GM10248 (cell line): ENCODE measurements at regions of chr3 and their contacts with region 1.

Region 1: GRCh38 chr3:65979162-65979561 is 59.6 kb downstream of the MAGI1 start:
- DNase-seq: no peak
- CTCF ChIP-seq: no peak

Region 2: DNA sequence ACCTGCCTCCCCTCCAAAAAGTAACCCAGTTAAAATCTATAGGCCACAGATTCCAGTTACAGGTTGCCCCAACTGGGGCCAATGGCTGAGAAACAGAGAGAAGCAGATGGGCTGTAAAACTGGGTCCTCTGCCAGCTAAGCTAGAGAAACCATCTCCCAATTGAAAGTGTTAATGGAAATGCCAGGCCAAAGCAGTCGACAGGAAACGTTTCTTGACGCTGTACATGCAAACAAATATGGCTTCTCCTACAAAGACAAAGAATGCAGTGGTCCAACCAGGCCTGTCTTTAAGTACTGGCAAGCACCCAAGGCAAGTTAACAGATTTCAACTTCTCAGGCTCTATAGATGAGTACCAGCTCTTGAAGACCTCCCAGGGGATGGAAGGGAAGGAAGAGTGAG is 11.7 kb before region 1 on chr3:
- CTCF ChIA-PET with region 1: interaction called, 24 read pairs
- POLR2A ChIA-PET with region 1: no interaction called
- DNase-seq: no peak
- CTCF ChIP-seq: no peak